Mucosa of descending colon (tissue), 3 donors: ENCODE measurements at regions of chr6 and their contacts with region 1.

Region 1: GRCh38 chr6:109382576-109383437 is 540 bp upstream of the CD164 start:
- DNase-seq: peak; percentile 94 to 97 (median 95)
- ATAC-seq: peak; percentile 85
- H3K4me3 ChIP-seq: peak overlapping the region; percentile 98
- H3K4me1 ChIP-seq: peaks cover 19% of the 10 kb centered on the region
- CTCF ChIP-seq: no peak

Region 2: DNA sequence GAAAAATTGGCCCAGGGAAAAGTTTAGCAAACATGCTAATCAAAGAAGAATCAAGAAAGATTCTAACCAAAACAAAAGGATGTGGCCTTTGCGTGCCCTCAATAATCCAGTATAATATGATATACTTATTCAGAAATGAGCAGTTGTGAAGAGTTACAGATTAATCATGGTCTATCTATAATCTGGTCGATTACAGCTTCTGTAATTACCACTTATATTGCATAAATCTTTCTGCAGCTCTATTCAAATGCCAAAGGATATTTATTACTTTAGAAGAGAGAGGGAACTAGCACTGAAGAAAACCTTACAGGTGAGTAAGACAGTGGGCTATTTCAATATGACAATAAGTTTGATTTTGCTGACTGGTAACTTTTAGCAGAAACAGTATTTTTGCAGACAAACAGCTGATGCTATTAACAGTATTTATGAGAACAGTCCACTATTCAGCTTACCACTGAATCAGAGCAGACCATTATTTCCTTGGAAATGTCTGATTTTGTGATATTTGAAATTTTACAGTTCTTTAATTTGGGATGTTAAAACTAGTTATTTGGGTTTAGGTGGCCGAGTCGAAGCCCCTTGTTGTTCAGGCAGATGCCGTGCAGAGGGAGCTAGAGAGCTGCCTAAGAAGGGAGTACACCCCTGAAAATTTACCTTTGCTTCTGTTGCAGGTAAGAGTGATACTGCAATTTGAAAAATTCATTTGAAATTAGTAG is 195.2 kb before region 1 on chr6:
- intact Hi-C with region 1: loop called (anchors 2 to 10 kb)
- DNase-seq: peak in 2 of 3 donors; percentile 76 to 82
- ATAC-seq: peak; percentile 93
- H3K4me3 ChIP-seq: no peak overlapping the region
- H3K4me1 ChIP-seq: no peaks in the 10 kb centered on the region
- CTCF ChIP-seq: peak; percentile 87

Region 3: DNA sequence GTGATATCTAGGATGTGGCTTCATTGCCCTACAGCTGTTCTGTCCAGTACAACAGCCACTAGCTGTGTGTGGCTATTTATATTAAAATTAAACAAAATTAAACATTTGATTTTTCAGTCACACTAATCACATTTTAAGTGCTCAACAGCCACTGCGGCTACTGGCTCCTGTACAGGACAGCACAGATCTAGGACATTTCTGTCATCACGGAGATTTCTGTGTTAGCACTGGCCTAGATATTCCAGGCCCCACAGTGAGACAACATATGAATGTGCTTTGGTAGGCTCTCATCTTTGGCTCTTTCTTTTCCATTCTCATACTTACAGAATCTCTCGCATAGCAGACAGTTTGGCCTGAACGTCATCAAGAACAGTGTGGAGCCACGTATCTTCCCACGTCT is 148.6 kb after region 1 on chr6:
- intact Hi-C with region 1: no loop called
- DNase-seq: no peak
- ATAC-seq: no peak
- H3K4me3 ChIP-seq: no peak overlapping the region
- H3K4me1 ChIP-seq: no peaks in the 10 kb centered on the region
- CTCF ChIP-seq: no peak